GM10248 (cell line): ENCODE measurements at regions of chr17 and their contacts with region 1.

Region 1: GRCh38 chr17:39980351-39981206 is at the start of gene PSMD3:
- DNase-seq: peak; percentile 96
- CTCF ChIP-seq: peak; percentile 75

Region 2: DNA sequence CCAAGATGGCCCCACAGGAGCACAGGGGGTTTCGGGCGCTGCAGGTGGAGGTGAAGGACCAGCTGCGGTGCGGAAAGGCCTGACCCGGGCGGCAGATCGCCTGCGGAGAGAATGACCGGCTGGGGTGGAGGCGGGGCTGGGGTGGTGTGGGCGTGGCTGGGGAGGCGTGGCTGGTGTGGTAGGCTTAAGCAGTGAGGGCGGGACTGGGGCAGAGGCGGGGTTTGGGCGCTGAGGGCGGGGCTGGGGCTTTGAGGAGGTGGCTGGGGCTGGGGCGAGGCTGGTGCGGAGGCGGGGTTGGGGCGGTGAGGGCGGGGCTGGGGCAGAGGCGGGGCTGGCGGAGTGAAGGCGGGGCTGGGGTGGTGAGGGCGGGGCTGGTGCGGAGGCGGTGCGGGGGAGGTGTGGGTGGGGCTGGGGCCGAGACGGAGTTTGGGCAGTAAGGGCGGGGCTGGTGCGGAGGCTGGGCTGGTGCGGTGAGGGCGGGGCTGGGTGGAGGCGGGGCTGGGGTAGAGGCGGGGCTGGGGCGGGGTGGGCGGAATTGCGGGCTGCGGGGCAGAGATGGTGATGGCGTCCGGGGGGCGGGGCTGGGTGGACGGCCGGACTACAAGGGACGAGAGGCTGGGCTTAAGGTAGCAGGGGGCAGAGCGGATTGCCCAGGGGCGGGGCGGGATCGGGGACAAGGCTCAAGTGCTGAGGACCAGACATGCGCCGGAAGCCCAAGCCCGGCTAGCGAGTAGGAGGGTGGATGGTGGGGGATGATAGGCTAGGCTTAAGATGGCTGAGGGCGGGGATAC is 27.7 kb before region 1 on chr17:
- CTCF ChIA-PET with region 1: interaction called, 42 read pairs
- POLR2A ChIA-PET with region 1: no interaction called
- DNase-seq: peak; percentile 98
- CTCF ChIP-seq: no peak

Region 3: GRCh38 chr17:39962642-39963220 is 17.8 kb before region 1 on chr17 and contains the start of gene GSDMA:
- CTCF ChIA-PET with region 1: interaction called, 42 read pairs
- POLR2A ChIA-PET with region 1: no interaction called
- DNase-seq: no peak
- CTCF ChIP-seq: no peak

Region 4: DNA sequence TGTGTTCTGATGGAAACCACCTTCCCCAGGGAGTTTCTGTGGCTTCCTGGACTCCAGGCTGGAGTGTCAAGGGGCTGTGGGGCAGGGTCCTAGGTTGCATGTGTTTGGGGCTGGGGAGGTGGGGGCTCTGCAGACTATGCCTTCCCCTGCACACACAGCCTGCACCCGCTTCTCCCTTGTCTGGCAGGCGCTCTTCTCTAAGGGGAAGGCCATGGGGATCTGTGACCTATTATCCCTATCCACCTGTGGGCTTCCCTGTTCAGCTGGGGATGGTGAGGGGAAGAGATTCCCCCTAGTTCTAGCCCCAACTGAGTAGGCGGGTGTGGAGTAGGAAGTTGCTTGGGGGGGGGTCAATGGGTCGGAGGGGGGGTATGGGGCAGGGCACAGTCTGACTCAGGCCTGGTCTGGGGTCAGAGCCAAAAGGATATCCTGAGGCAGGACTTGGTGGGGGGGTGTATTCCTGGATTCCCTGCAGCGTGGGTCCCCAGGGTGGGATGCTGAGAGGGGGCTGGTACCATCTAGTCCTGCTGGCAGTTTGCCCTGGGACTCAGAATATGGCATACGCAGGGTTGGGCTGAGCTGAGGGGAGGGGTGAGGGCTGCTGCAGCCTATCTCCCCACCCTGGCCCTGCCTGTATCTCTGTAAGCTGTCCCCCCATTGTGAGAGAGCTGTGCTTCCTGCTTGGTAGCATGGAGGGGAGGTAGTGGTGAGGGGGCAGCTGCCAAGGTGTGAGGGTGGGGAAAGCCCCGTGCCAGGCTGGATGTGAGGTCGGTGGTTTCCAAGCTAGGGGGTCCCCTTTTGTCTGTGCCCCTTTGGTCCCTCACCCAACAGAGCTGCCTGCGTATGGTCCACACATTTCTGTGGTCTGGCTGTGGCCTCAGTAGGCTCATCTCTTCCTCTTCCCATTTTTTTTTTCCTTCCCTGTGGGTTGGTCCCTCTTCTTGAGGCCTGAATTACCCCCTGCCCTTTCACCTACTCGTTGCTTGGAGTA is 343.1 kb after region 1 on chr17:
- CTCF ChIA-PET with region 1: no interaction called
- POLR2A ChIA-PET with region 1: interaction called, 10 read pairs
- DNase-seq: no peak
- CTCF ChIP-seq: no peak